H1 (cell line): ENCODE measurements at regions of chr15 and their contacts with region 1.

Region 1: GRCh38 chr15:77907824-77908751 is 169.4 kb downstream of the TBC1D2B start:
- DNase-seq: no peak
- H3K4me3 ChIP-seq: no peak overlapping the region
- H3K27ac ChIP-seq: no peak overlapping the region
- H3K4me1 ChIP-seq: peaks cover 0 to under 1% (median 0%) of the 10 kb centered on the region in 4 experiments; a peak in 2 of 7 replicates
- H3K27me3 ChIP-seq: no peaks in the 10 kb centered on the region
- CTCF ChIP-seq: peak in 1 of 3 experiments; percentile 26; a peak in 1 of 4 replicates
- EP300 ChIP-seq: no peak
- POLR2A ChIP-seq: no peak
- RAD21 ChIP-seq: no peak

Region 2: GRCh38 chr15:77921664-77922063 is 13.6 kb after region 1 on chr15:
- CTCF ChIA-PET with region 1: interaction called, 10 read pairs
- POLR2A ChIA-PET with region 1: interaction called, 3 read pairs
- DNase-seq: no peak
- H3K4me3 ChIP-seq: no peak overlapping the region
- H3K27ac ChIP-seq: no peak overlapping the region
- H3K4me1 ChIP-seq: no peaks in the 10 kb centered on the region
- H3K27me3 ChIP-seq: no peaks in the 10 kb centered on the region
- CTCF ChIP-seq: no peak
- EP300 ChIP-seq: no peak
- POLR2A ChIP-seq: no peak
- RAD21 ChIP-seq: no peak

Region 3: DNA sequence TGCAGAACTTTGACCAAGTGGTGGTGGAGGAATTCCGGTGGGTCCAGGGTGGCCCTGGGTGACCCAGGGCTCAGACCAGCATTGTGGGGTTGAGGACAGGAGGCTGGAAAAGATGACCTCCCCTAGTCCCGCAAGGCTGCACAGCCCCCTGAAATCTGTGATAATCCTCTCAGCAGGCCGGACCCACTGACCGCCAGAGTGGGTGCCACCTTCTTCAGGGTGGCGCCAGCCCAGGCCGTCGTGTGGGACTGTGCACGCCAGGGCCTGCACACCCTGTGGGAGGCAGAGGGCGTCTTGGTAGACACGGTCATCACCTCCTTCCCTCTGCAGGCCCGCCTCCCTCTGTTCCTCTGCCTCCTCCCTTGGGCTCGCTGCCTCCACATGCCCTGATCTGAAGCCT is 31.8 kb after region 1 on chr15:
- CTCF ChIA-PET with region 1: interaction called, 15 read pairs
- POLR2A ChIA-PET with region 1: no interaction called
- DNase-seq: no peak
- H3K4me3 ChIP-seq: no peak overlapping the region
- H3K27ac ChIP-seq: no peak overlapping the region
- H3K4me1 ChIP-seq: peaks cover 1 to 5% (median 2%) of the 10 kb centered on the region in 4 experiments; a peak in 4 of 7 replicates
- H3K27me3 ChIP-seq: peaks cover 0 to 5% (median 0%) of the 10 kb centered on the region in 4 experiments; a peak in 2 of 7 replicates
- CTCF ChIP-seq: no peak
- EP300 ChIP-seq: no peak
- POLR2A ChIP-seq: no peak
- RAD21 ChIP-seq: no peak